ENCODE measurements at regions of chr1 and their contacts with region 1.

Region 1: GRCh38 chr1:26695356-26696118 is at the start of gene ARID1A:
- DNase-seq: peak; percentile 71
- ATAC-seq: peak; percentile 63
- H3K4me3 ChIP-seq: peak within 1 kb of the TSS; percentile 71 to 80
- H3K27ac ChIP-seq: peak within 1 kb of the TSS; percentile 100
- H3K4me1 ChIP-seq: peaks cover 46% of the 10 kb centered on the region
- H3K27me3 ChIP-seq: no peaks in the 10 kb centered on the region
- CTCF ChIP-seq: 0 out of 2 replicates have a peak, but pooled peaks have one; percentile 8
- total RNA-seq, gene ARID1A: 110 TPM

Region 2: GRCh38 chr1:26391450-26391849 is 304.1 kb before region 1 on chr1:
- CTCF ChIA-PET with region 1: no interaction called
- POLR2A ChIA-PET with region 1: no interaction called
- in situ Hi-C with region 1: no loop called
- intact Hi-C with region 1: no loop called
- DNase-seq: no peak
- ATAC-seq: peak; percentile 86
- H3K4me3 ChIP-seq: no peak overlapping the region
- H3K27ac ChIP-seq: no peak overlapping the region
- H3K4me1 ChIP-seq: no peaks in the 10 kb centered on the region
- H3K27me3 ChIP-seq: no peaks in the 10 kb centered on the region
- CTCF ChIP-seq: peak; percentile 89

Region 3: GRCh38 chr1:26677306-26678115 is 18.0 kb before region 1 on chr1:
- CTCF ChIA-PET with region 1: interaction called, 12 read pairs
- POLR2A ChIA-PET with region 1: interaction called, 11 read pairs
- in situ Hi-C with region 1: no loop called
- intact Hi-C with region 1: no loop called
- DNase-seq: peak; percentile 95
- ATAC-seq: peak; percentile 99
- H3K4me3 ChIP-seq: peak overlapping the region in 1 of 2 experiments; percentile 33; a peak in 2 of 4 replicates
- H3K27ac ChIP-seq: peak overlapping the region; percentile 68
- H3K4me1 ChIP-seq: peaks cover 12% of the 10 kb centered on the region
- H3K27me3 ChIP-seq: no peaks in the 10 kb centered on the region
- CTCF ChIP-seq: peak; percentile 92